ENCODE measurements at regions of chr1 and their contacts with region 1.

Region 1: DNA sequence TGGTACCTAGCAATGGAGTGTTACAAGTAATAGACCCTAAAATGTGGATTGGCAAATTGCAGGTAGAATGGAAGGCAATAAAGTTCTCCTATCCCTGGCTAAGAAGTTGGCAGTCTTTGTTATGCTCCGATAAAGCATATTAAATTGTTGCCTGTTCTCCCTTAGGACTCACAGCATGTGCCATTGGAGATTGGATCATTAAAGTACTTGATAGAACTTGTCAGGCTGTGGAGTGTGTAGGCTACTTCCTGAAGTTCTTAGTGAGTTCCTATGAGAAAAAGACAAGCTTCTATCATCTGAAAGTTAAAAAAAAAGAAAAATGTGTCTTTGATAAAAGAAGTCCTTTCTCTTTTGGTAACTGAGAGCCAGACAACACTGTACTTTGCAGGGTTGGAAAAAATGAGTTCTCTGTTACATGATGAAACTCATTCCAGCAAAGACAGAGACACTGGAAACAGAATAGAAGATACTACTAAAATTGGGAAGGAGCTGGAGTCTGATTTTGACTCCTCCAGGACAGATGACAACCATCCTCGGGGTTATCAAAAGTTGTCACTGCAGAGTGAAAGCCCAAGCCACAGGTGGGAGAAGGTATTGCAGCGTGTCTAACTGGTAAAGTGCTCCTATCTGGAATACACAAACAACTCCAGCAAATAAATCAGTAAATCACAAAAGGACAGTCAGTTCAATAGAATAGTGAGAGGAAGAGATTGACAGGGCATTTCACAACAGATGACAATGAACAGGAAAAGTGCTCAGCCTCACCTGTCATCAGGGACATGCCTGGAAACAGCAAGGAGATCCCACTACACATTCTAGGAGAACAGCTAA is 87.5 kb upstream of the WDR26 start:
- DNase-seq: no peak
- ATAC-seq: no peak
- H3K4me3 ChIP-seq: no peak overlapping the region
- H3K27ac ChIP-seq: no peak overlapping the region
- H3K4me1 ChIP-seq: peaks cover 5% of the 10 kb centered on the region; the same call in 1 of the 2 replicates
- H3K27me3 ChIP-seq: no peaks in the 10 kb centered on the region
- CTCF ChIP-seq: no peak
- POLR2A ChIP-seq: no peak
- RAD21 ChIP-seq: no peak

Region 2: DNA sequence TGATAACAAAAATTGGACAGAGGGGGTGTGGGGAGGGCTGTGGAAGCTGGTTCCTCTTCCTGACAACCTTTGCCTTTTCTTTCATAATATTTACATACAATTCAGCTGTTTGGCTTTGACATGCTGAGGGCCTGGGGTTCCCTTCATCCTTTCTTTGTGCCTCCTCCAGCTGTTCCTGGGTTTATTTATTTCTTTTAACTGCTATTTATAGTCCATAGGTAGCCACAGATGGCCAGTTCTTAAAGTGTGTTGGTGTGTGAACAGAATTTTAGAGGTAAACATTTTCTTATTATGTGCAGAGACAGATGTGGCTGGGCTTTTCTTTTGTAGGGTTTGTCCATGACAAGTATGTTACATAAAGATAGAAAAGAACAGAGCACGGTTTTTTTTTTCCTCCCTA is 59.9 kb after region 1 on chr1:
- CTCF ChIA-PET with region 1: no interaction called
- POLR2A ChIA-PET with region 1: no interaction called
- dilution Hi-C with region 1: loop called (anchors 10 kb)
- in situ Hi-C with region 1: no loop called
- intact Hi-C with region 1: loop called (anchors 5 kb)
- DNase-seq: peak; percentile 65
- ATAC-seq: peak; percentile 38
- H3K4me3 ChIP-seq: no peak overlapping the region
- H3K27ac ChIP-seq: no peak overlapping the region
- H3K4me1 ChIP-seq: peaks cover 2% of the 10 kb centered on the region; the same call in 1 of the 2 replicates
- H3K27me3 ChIP-seq: no peaks in the 10 kb centered on the region
- CTCF ChIP-seq: no peak
- POLR2A ChIP-seq: no peak
- RAD21 ChIP-seq: no peak

Region 3: DNA sequence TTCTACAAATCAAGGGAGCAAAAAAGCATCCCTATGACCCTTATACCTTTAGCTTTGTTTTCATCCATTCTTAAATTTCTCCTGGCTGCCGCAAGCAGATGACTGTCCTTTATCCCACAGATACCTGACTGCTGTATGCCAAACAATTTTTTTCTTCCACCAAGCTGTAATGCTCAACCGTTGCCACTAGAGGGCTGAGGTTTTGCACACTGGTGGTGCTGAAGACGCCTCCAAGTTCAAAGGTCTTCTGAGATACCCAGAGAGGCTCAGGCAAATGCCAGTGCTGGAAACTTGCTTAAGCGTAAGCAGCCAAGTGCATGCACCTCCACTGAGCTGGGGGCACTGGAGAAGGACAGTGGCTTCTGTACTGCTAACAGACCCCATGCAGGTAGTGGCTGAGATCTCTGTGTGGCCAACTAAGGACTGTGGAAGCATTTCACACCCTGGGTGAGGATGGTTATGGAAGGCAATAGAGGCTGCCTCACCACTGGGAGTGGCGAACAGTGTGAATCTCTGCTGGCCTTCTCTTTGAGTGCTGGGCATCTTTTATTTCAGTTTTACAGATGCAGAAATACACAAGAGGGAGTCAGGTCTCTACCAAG is 122.5 kb after region 1 on chr1:
- CTCF ChIA-PET with region 1: interaction called, 3 read pairs
- POLR2A ChIA-PET with region 1: no interaction called
- dilution Hi-C with region 1: no loop called
- in situ Hi-C with region 1: loop called (anchors 5 kb)
- intact Hi-C with region 1: no loop called
- DNase-seq: peak; percentile 55
- ATAC-seq: peak; percentile 96
- H3K4me3 ChIP-seq: no peak overlapping the region
- H3K27ac ChIP-seq: no peak overlapping the region
- H3K4me1 ChIP-seq: peaks cover 6% of the 10 kb centered on the region; the same call in 1 of the 2 replicates
- H3K27me3 ChIP-seq: no peaks in the 10 kb centered on the region
- CTCF ChIP-seq: peak; percentile 74
- POLR2A ChIP-seq: no peak
- RAD21 ChIP-seq: peak; percentile 65

Region 4: DNA sequence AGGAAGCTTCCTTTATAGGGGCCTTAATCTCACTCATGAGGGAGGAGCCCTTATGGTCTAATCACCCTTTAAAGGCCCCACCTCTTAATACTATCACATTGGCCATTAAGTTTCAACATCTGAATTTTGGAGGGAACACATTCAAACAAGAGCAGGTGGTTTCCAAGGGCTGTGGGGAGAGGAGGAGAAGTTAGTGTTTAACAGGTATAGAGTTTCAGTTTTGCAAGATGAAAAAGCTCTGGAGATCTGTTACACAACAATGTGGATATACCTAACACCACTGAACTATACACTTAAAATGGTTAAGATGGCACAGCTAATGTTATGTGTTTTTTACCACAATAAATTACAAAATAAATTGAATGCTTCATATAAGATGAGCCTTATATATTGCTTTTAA is 293.9 kb after region 1 on chr1:
- CTCF ChIA-PET with region 1: no interaction called
- POLR2A ChIA-PET with region 1: no interaction called
- dilution Hi-C with region 1: no loop called
- in situ Hi-C with region 1: no loop called
- intact Hi-C with region 1: no loop called
- DNase-seq: no peak
- ATAC-seq: no peak
- H3K4me3 ChIP-seq: no peak overlapping the region
- H3K27ac ChIP-seq: no peak overlapping the region
- H3K4me1 ChIP-seq: no peaks in the 10 kb centered on the region
- H3K27me3 ChIP-seq: peaks cover 2% of the 10 kb centered on the region; the same call in 1 of the 2 replicates
- CTCF ChIP-seq: no peak
- POLR2A ChIP-seq: no peak
- RAD21 ChIP-seq: no peak